CD4-positive, alpha-beta memory T cell (primary cell): ENCODE measurements at regions of chr7 and their contacts with region 1.

Region 1: DNA sequence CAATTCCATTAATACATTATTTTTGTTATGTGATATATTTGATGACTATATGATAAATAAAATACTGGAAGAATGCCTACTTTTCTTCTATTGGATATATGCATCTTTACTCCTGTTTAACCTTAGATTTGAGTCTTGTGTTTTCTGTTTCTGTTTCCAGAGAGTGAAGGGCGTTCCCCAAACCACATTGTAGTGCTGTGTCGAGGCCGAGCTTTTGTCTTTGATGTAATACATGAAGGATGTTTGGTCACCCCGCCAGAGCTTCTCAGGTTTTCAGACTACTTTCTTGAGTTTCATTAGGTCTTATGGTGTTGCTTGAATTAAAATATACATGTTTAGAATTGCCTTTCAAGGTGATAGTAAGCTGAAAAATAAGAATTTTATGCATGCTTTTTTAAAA is 23.8 kb downstream of the CROT start:
- DNase-seq: peak; percentile 45 to 64 (median 49)
- H3K4me3 ChIP-seq: no peak overlapping the region
- H3K4me3 Mint-ChIP-seq: peak overlapping the region in 5 of 8 donors; percentile 25 to 76 (median 35)
- H3K27ac ChIP-seq: no peak overlapping the region
- H3K27ac Mint-ChIP-seq: peak overlapping the region in 5 of 7 donors; percentile 15 to 94 (median 81)
- H3K4me1 ChIP-seq: peaks cover 18% of the 10 kb centered on the region
- H3K4me1 Mint-ChIP-seq: peaks cover 0 to 8% (median 3%) of the 10 kb centered on the region in 4 donors
- H3K27me3 ChIP-seq: no peaks in the 10 kb centered on the region
- H3K27me3 Mint-ChIP-seq: no peaks in the 10 kb centered on the region

Region 2: GRCh38 chr7:87345166-87345927 is 23.9 kb before region 1 on chr7 and contains the start of gene CROT:
- CTCF ChIA-PET with region 1: interaction called, 9 read pairs
- POLR2A ChIA-PET with region 1: interaction called, 23 read pairs
- intact Hi-C with region 1: loop called (anchors 1 kb)
- DNase-seq: peak; percentile 91 to 94 (median 92)
- H3K4me3 ChIP-seq: peak within 1 kb of the TSS; percentile 13 to 73
- H3K4me3 Mint-ChIP-seq: peak within 1 kb of the TSS; percentile 89 to 97 (median 96)
- H3K27ac ChIP-seq: peak within 1 kb of the TSS; percentile 80
- H3K27ac Mint-ChIP-seq: peak within 1 kb of the TSS; percentile 94 to 98 (median 95)
- H3K4me1 ChIP-seq: peaks cover 44% of the 10 kb centered on the region
- H3K4me1 Mint-ChIP-seq: peaks cover 33 to 57% (median 46%) of the 10 kb centered on the region in 4 donors
- H3K27me3 ChIP-seq: no peaks in the 10 kb centered on the region
- H3K27me3 Mint-ChIP-seq: no peaks in the 10 kb centered on the region
- total RNA-seq, gene CROT: 17.8 to 19.0 TPM